GM12878 (cell line): ENCODE measurements at regions of chr10 and their contacts with region 1.

Region 1: DNA sequence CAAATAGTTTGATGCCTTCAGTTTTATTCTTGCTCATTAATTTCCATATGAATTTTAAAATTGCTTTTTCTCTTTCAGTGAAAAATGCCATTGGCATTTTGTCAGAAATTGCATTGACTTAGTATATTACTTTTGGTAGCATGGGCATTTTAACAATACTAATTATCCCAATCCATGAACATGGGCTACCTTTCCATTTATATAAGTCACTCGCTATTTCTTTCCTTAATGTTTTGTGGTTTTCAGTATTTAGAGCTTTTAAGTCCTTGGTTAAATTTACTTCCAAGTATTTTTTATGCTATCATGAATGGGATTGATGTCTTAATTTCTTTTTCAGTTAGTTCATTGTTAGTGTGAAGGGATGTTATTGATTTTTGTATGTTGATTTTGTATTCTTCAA is 297.4 kb downstream of the ATRNL1 start:
- DNase-seq: no peak
- ATAC-seq: no peak
- H3K4me3 ChIP-seq: no peak overlapping the region
- H3K27ac ChIP-seq: no peak overlapping the region
- H3K4me1 ChIP-seq: no peaks in the 10 kb centered on the region
- H3K27me3 ChIP-seq: no peaks in the 10 kb centered on the region
- CTCF ChIP-seq: no peak
- EP300 ChIP-seq: no peak
- POLR2A ChIP-seq: no peak
- RAD21 ChIP-seq: no peak

Region 2: DNA sequence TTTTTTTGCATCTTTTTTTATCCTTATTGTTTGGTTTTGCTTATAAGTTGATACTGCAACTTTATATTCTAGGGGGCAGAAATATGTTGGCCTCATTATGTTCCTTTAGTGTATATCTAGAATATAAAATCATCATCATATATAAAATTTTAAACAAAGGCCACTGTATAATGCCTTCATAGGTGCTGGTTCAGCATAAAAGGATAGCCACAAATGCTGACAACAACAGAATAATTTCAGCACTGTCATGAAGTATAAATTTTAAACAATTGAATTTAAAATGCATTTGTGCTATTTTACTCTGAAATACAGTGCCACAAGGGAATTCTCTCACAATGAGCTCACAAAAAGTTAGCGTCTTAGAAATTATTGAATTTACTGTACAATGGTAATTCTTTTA is 11.5 kb before region 1 on chr10:
- CTCF ChIA-PET with region 1: no interaction called
- POLR2A ChIA-PET with region 1: no interaction called
- RAD21 ChIA-PET with region 1: no interaction called
- SMC1A ChIA-PET with region 1: no interaction called
- in situ Hi-C with region 1: no loop called
- intact Hi-C with region 1: loop called (anchors 1 kb)
- DNase-seq: no peak
- ATAC-seq: no peak
- H3K4me3 ChIP-seq: no peak overlapping the region
- H3K27ac ChIP-seq: no peak overlapping the region
- H3K4me1 ChIP-seq: no peaks in the 10 kb centered on the region
- H3K27me3 ChIP-seq: no peaks in the 10 kb centered on the region
- CTCF ChIP-seq: no peak
- EP300 ChIP-seq: no peak
- POLR2A ChIP-seq: no peak
- RAD21 ChIP-seq: no peak

Region 3: GRCh38 chr10:115402690-115403089 is 12.1 kb after region 1 on chr10:
- CTCF ChIA-PET with region 1: no interaction called
- POLR2A ChIA-PET with region 1: no interaction called
- RAD21 ChIA-PET with region 1: no interaction called
- SMC1A ChIA-PET with region 1: no interaction called
- in situ Hi-C with region 1: no loop called
- intact Hi-C with region 1: no loop called
- DNase-seq: no peak
- ATAC-seq: no peak
- H3K4me3 ChIP-seq: no peak overlapping the region
- H3K27ac ChIP-seq: no peak overlapping the region
- H3K4me1 ChIP-seq: no peaks in the 10 kb centered on the region
- H3K27me3 ChIP-seq: no peaks in the 10 kb centered on the region
- CTCF ChIP-seq: no peak
- EP300 ChIP-seq: no peak
- POLR2A ChIP-seq: no peak
- RAD21 ChIP-seq: no peak